B cell (primary cell): ENCODE measurements at regions of chr4 and their contacts with region 1.

Region 1: GRCh38 chr4:121900132-121900983 is 30.1 kb upstream of the BBS7 start:
- DNase-seq: peak; percentile 57
- ATAC-seq: peak; percentile 45
- H3K4me3 ChIP-seq: no peak overlapping the region
- H3K4me3 Mint-ChIP-seq: no peak overlapping the region
- H3K27ac ChIP-seq: no peak overlapping the region
- H3K27ac Mint-ChIP-seq: no peak overlapping the region
- H3K4me1 ChIP-seq: no peaks in the 10 kb centered on the region
- H3K4me1 Mint-ChIP-seq: peaks cover 3% of the 10 kb centered on the region
- H3K27me3 ChIP-seq: peaks cover 0 to 17% (median 1%) of the 10 kb centered on the region in 4 experiments
- H3K27me3 Mint-ChIP-seq: peaks cover 28% of the 10 kb centered on the region
- CTCF ChIP-seq: peak; percentile 90

Region 2: GRCh38 chr4:121614101-121614500 is 286.3 kb before region 1 on chr4:
- CTCF ChIA-PET with region 1: no interaction called
- POLR2A ChIA-PET with region 1: no interaction called
- intact Hi-C with region 1: no loop called
- DNase-seq: no peak
- ATAC-seq: no peak
- H3K4me3 ChIP-seq: no peak overlapping the region
- H3K4me3 Mint-ChIP-seq: no peak overlapping the region
- H3K27ac ChIP-seq: no peak overlapping the region
- H3K27ac Mint-ChIP-seq: no peak overlapping the region
- H3K4me1 ChIP-seq: no peaks in the 10 kb centered on the region
- H3K4me1 Mint-ChIP-seq: no peaks in the 10 kb centered on the region
- H3K27me3 ChIP-seq: no peaks in the 10 kb centered on the region
- H3K27me3 Mint-ChIP-seq: peaks cover 16% of the 10 kb centered on the region
- CTCF ChIP-seq: no peak

Region 3: GRCh38 chr4:121950212-121950679 is 49.9 kb after region 1 on chr4:
- CTCF ChIA-PET with region 1: interaction called, 5 read pairs
- POLR2A ChIA-PET with region 1: no interaction called
- intact Hi-C with region 1: loop called (anchors 2 kb)
- DNase-seq: peak; percentile 72
- ATAC-seq: peak; percentile 75
- H3K4me3 ChIP-seq: peak overlapping the region; percentile 40 to 81 (median 64)
- H3K4me3 Mint-ChIP-seq: peak overlapping the region; percentile 94
- H3K27ac ChIP-seq: no peak overlapping the region
- H3K27ac Mint-ChIP-seq: no peak overlapping the region
- H3K4me1 ChIP-seq: peaks cover 14 to 16% of the 10 kb centered on the region in 2 donors
- H3K4me1 Mint-ChIP-seq: peaks cover 19% of the 10 kb centered on the region
- H3K27me3 ChIP-seq: peaks cover 0 to 37% (median 28%) of the 10 kb centered on the region in 4 experiments
- H3K27me3 Mint-ChIP-seq: peaks cover 69% of the 10 kb centered on the region
- CTCF ChIP-seq: peak; percentile 62

Region 4: GRCh38 chr4:122003335-122003734 is 103.0 kb after region 1 on chr4:
- CTCF ChIA-PET with region 1: interaction called, 41 read pairs
- POLR2A ChIA-PET with region 1: no interaction called
- intact Hi-C with region 1: loop called (anchors 1 kb)
- DNase-seq: peak; percentile 13
- ATAC-seq: peak; percentile 65
- H3K4me3 ChIP-seq: no peak overlapping the region
- H3K4me3 Mint-ChIP-seq: no peak overlapping the region
- H3K27ac ChIP-seq: no peak overlapping the region
- H3K27ac Mint-ChIP-seq: no peak overlapping the region
- H3K4me1 ChIP-seq: no peaks in the 10 kb centered on the region
- H3K4me1 Mint-ChIP-seq: no peaks in the 10 kb centered on the region
- H3K27me3 ChIP-seq: peaks cover 0 to 11% (median 3%) of the 10 kb centered on the region in 4 experiments
- H3K27me3 Mint-ChIP-seq: peaks cover 30% of the 10 kb centered on the region
- CTCF ChIP-seq: peak; percentile 58

Region 5: DNA sequence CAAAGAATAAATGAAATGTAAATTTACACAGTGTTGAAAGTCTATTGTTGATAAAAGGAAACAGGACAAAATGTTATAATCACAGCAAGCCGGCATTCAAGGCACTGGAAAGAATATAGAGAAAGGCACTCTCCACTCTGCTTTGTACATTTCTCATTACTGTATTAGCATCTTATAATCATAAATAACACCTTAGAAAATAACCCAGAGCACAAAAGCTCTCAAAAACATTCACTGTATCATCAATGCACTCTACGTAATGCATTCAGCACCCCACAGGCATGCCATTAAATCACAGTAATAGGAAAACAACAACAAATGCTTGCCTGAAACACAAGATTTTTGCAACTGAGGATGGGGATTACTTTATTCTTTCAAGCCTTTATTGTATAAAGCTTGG is 126.8 kb after region 1 on chr4:
- CTCF ChIA-PET with region 1: no interaction called
- POLR2A ChIA-PET with region 1: no interaction called
- intact Hi-C with region 1: no loop called
- DNase-seq: no peak
- ATAC-seq: no peak
- H3K4me3 ChIP-seq: no peak overlapping the region
- H3K4me3 Mint-ChIP-seq: no peak overlapping the region
- H3K27ac ChIP-seq: no peak overlapping the region
- H3K27ac Mint-ChIP-seq: no peak overlapping the region
- H3K4me1 ChIP-seq: no peaks in the 10 kb centered on the region
- H3K4me1 Mint-ChIP-seq: no peaks in the 10 kb centered on the region
- H3K27me3 ChIP-seq: no peaks in the 10 kb centered on the region
- H3K27me3 Mint-ChIP-seq: no peaks in the 10 kb centered on the region
- CTCF ChIP-seq: no peak

Region 6: GRCh38 chr4:122045533-122045932 is 145.2 kb after region 1 on chr4:
- CTCF ChIA-PET with region 1: no interaction called
- POLR2A ChIA-PET with region 1: no interaction called
- intact Hi-C with region 1: no loop called
- DNase-seq: no peak
- ATAC-seq: no peak
- H3K4me3 ChIP-seq: no peak overlapping the region
- H3K4me3 Mint-ChIP-seq: no peak overlapping the region
- H3K27ac ChIP-seq: no peak overlapping the region
- H3K27ac Mint-ChIP-seq: no peak overlapping the region
- H3K4me1 ChIP-seq: no peaks in the 10 kb centered on the region
- H3K4me1 Mint-ChIP-seq: no peaks in the 10 kb centered on the region
- H3K27me3 ChIP-seq: no peaks in the 10 kb centered on the region
- H3K27me3 Mint-ChIP-seq: peaks cover 28% of the 10 kb centered on the region
- CTCF ChIP-seq: no peak

Region 7: DNA sequence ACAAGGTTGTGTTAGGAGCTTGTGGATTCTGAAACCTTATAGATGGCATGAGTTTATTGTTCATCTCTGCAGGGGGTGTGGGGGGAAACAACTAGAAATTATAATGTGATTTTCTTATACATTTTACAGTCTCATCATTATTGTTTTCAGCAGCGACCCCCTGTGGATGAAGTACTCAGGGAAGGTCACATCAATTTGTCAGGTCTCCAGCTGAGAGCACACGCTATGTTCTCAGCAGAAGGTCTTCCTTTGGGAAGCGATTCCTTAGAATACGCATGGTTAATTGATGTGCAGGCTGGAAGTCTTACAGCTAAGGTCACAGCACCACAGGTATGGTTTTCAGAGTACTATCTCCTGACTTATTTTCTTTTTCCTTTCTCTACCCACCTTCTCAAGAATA is 324.0 kb after region 1 on chr4:
- CTCF ChIA-PET with region 1: interaction called, 5 read pairs
- POLR2A ChIA-PET with region 1: no interaction called
- intact Hi-C with region 1: loop called (anchors 1 kb)
- DNase-seq: peak; percentile 9
- ATAC-seq: no peak
- H3K4me3 ChIP-seq: no peak overlapping the region
- H3K4me3 Mint-ChIP-seq: no peak overlapping the region
- H3K27ac ChIP-seq: no peak overlapping the region
- H3K27ac Mint-ChIP-seq: no peak overlapping the region
- H3K4me1 ChIP-seq: no peaks in the 10 kb centered on the region
- H3K4me1 Mint-ChIP-seq: no peaks in the 10 kb centered on the region
- H3K27me3 ChIP-seq: no peaks in the 10 kb centered on the region
- H3K27me3 Mint-ChIP-seq: no peaks in the 10 kb centered on the region
- CTCF ChIP-seq: peak; percentile 15

Region 8: GRCh38 chr4:122577808-122578781 is 677.7 kb after region 1 on chr4:
- CTCF ChIA-PET with region 1: interaction called, 34 read pairs
- POLR2A ChIA-PET with region 1: no interaction called
- intact Hi-C with region 1: no loop called
- DNase-seq: peak; percentile 32
- ATAC-seq: no peak
- H3K4me3 ChIP-seq: no peak overlapping the region
- H3K4me3 Mint-ChIP-seq: no peak overlapping the region
- H3K27ac ChIP-seq: no peak overlapping the region
- H3K27ac Mint-ChIP-seq: no peak overlapping the region
- H3K4me1 ChIP-seq: peaks cover 7% of the 10 kb centered on the region in 2 donors
- H3K4me1 Mint-ChIP-seq: peaks cover 6% of the 10 kb centered on the region
- H3K27me3 ChIP-seq: peaks cover 0 to 12% (median 7%) of the 10 kb centered on the region in 4 experiments
- H3K27me3 Mint-ChIP-seq: peaks cover 29% of the 10 kb centered on the region
- CTCF ChIP-seq: peak; percentile 81

Region 9: GRCh38 chr4:122716825-122717448 is 816.6 kb after region 1 on chr4:
- CTCF ChIA-PET with region 1: interaction called, 9 read pairs
- POLR2A ChIA-PET with region 1: no interaction called
- intact Hi-C with region 1: loop called (anchors 5 kb)
- DNase-seq: peak; percentile 63
- ATAC-seq: peak; percentile 73
- H3K4me3 ChIP-seq: no peak overlapping the region
- H3K4me3 Mint-ChIP-seq: no peak overlapping the region
- H3K27ac ChIP-seq: no peak overlapping the region
- H3K27ac Mint-ChIP-seq: no peak overlapping the region
- H3K4me1 ChIP-seq: no peaks in the 10 kb centered on the region
- H3K4me1 Mint-ChIP-seq: no peaks in the 10 kb centered on the region
- H3K27me3 ChIP-seq: peaks cover 0 to 3% (median 0%) of the 10 kb centered on the region in 4 experiments
- H3K27me3 Mint-ChIP-seq: peaks cover 15% of the 10 kb centered on the region
- CTCF ChIP-seq: peak; percentile 76

Region 10: DNA sequence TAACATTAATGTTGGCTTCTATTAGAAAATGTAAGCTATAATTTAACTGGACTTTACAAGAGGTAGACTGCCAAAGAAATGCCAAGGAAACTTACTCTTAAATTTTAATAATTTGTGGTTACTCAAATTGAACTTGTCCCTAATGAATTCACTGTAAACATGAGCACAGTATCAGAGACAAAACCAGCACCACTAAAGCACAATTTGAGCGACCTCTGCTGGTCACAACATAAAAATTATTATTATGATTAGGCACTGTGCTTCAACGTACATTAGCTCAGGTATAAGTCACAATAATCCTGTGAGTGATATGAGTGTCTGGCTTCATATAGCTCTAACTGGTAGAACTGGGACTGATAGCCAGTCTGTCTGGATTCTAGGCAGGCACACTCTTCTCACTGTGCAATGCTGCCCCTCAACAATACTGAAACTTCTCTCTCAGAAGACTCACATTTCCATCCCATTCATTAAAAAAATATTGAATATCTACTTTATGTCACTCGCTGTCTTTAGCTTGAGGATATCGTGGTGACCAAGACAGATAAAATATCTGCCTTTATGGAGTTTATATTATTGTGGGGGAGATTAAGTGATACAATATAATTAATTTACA is 1014.0 kb after region 1 on chr4:
- CTCF ChIA-PET with region 1: interaction called, 6 read pairs
- POLR2A ChIA-PET with region 1: no interaction called
- intact Hi-C with region 1: loop called (anchors 5 kb)
- DNase-seq: no peak
- ATAC-seq: no peak
- H3K4me3 ChIP-seq: no peak overlapping the region
- H3K4me3 Mint-ChIP-seq: no peak overlapping the region
- H3K27ac ChIP-seq: no peak overlapping the region
- H3K27ac Mint-ChIP-seq: no peak overlapping the region
- H3K4me1 ChIP-seq: no peaks in the 10 kb centered on the region
- H3K4me1 Mint-ChIP-seq: no peaks in the 10 kb centered on the region
- H3K27me3 ChIP-seq: no peaks in the 10 kb centered on the region
- H3K27me3 Mint-ChIP-seq: no peaks in the 10 kb centered on the region
- CTCF ChIP-seq: peak; percentile 59